MCF 10A (cell line): ENCODE measurements at regions of chr18 and their contacts with region 1.

Region 1: GRCh38 chr18:37335409-37335736 is 230.2 kb downstream of the CELF4 start:
- DNase-seq: peak; percentile 11
- H3K4me3 Mint-ChIP-seq: no peak overlapping the region
- H3K27ac Mint-ChIP-seq: no peak overlapping the region
- H3K4me1 Mint-ChIP-seq: no peaks in the 10 kb centered on the region
- H3K27me3 Mint-ChIP-seq: no peaks in the 10 kb centered on the region
- CTCF ChIP-seq: no peak

Region 2: GRCh38 chr18:36942264-36942663 is 393.1 kb before region 1 on chr18:
- CTCF ChIA-PET with region 1: no interaction called
- POLR2A ChIA-PET with region 1: no interaction called
- intact Hi-C with region 1: loop called (anchors 10 kb)
- DNase-seq: peak; percentile 54
- H3K4me3 Mint-ChIP-seq: no peak overlapping the region
- H3K27ac Mint-ChIP-seq: no peak overlapping the region
- H3K4me1 Mint-ChIP-seq: no peaks in the 10 kb centered on the region
- H3K27me3 Mint-ChIP-seq: no peaks in the 10 kb centered on the region
- CTCF ChIP-seq: peak; percentile 83